Right cardiac atrium (tissue), 5 donors: ENCODE measurements at regions of chr19 and their contacts with region 1.

Region 1: DNA sequence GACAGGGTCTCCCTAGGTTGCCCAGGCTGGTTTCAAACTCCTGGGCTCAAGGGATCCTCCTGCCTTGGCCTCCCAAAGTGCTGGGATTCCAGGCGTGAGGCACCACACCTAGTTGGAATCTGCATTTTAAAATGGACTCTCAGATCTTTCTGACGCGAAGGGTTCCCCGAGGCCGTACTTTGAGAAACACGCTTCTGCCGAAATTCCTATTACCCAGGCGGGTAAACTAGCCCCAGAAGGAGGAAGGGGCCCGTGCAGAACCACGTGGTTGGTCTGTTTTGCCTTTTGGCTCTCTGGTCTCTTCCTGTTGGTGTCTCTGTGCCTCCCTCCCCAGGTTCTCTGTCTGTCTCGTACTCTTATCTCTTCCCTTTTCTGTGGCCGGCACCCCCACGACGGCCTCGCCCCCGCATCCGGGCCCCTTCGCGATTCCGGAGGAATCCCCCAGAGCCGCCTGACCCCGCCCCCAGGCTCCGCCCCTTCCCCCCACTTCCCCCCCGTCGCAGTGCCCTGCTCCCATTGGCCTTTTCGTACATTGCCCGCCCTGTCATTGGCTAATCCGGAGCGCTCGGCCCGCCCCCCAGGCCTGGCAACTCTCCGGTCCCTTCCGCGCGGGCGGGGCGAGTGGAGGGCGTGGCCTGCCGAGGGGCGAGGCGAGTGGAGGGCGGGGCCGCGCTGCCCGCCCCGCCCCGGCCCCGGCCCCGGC is at the start of gene TNFAIP8L1:
- DNase-seq: peak; percentile 96 to 98 (median 98)
- ATAC-seq: peak; percentile 93 to 96
- H3K4me3 ChIP-seq: peak within 1 kb of the TSS; percentile 55
- H3K27ac ChIP-seq: peak within 1 kb of the TSS; percentile 30
- H3K4me1 ChIP-seq: no peaks in the 10 kb centered on the region
- H3K27me3 ChIP-seq: no peaks in the 10 kb centered on the region
- total RNA-seq, gene TNFAIP8L1: 2.8 to 5.6 (median 4.6) TPM

Region 2: DNA sequence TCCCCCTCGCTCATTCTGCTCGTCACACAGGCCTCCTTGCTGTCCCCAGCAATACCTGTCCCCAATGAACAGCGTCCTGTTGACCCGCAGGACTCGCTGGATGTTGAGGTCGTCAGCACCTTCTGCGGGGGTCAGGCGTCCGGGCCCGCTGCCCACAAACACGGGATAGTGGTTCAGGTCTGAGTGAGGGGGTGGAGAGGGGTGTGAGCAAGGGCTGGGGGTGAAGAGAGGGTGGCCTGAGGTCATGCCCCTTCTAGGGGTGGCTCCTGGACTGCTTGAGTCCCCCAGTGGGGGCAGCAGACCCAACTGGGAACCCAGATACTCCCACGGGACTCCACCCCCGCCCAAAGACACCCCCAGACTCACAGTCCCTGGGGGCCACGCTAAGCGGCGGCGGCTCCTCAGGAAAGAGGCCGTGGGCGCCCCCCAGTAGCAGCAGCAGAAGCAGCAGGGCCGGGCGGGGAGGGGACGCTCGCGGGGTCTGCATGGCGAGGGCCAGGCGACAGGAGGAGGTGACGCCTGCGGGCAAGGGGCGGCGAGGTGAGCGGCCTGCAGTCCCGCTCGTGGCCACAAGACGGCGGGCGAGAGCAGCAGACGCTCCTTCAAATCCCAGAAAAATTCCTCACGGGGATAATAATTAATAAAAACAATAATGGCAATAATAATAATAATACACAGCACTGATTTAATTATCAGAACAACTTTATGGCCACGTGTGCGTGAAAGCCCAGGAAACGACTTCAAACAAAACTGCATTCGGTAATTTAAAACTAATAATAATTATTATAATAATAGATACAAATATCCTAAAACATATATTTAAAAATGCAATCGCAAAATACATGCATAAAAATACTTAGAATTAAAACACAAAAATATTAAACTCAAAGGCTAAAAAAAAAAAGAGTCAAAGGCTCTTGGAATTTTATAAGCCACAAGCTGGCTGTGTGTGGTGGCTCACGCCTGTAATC is 80.7 kb before region 1 on chr19:
- intact Hi-C with region 1: loop called in 2 of 4 experiments (anchors 5 kb)
- DNase-seq: peak in 2 of 3 donors; percentile 77 to 78
- ATAC-seq: no peak
- H3K4me3 ChIP-seq: peak overlapping the region; percentile 65
- H3K27ac ChIP-seq: no peak overlapping the region
- H3K4me1 ChIP-seq: no peaks in the 10 kb centered on the region
- H3K27me3 ChIP-seq: no peaks in the 10 kb centered on the region

Region 3: DNA sequence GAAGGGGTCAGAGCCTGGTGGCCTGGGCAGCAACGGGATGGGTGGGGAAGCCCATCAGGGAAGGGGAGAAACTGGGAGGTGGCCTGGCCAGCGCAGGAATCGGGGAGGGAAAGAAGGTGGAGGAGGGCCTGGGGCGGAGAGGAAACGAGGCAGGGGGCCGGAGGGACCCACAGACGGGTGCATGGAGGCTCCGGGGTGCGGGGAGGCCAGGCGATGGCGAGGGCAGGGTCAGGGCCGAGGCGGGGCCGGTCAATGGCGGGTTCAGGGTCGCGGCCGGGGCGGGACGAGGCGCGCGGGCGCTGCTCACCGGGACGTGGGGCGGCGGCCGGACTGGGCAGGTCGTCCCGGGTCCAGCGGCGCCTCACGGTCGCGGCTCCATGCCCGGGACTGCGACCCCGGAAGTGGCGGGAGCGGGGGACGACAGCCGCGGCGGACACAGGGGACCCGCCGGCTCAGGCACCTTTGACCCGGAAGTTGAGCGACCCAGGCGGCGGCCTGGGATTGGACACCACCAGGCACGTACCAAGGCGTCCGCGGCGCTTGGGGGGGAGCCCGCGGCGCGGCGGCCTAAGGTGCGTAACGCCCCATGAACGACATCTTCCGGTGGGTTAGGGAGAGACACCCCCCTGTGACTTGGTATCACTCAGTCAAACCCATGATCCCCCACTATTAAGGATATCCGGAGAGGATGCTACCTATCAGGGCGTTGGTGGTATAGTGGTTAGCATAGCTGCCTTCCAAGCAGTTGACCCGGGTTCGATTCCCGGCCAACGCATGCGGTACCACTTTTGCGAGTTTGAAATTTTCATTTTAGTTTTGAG is 84.6 kb after region 1 on chr19 and contains the start of gene DPP9:
- intact Hi-C with region 1: no loop called
- DNase-seq: peak; percentile 98 to 99 (median 99)
- ATAC-seq: peak; percentile 97 to 99
- H3K4me3 ChIP-seq: peak within 1 kb of the TSS; percentile 64
- H3K27ac ChIP-seq: peak within 1 kb of the TSS; percentile 70
- H3K4me1 ChIP-seq: peaks cover 4% of the 10 kb centered on the region
- H3K27me3 ChIP-seq: no peaks in the 10 kb centered on the region
- total RNA-seq, gene DPP9: 35.1 to 43.9 (median 36.9) TPM